ENCODE measurements at regions of chr1 and their contacts with region 1.

Region 1: GRCh38 chr1:168342572-168343280 is 62.0 kb downstream of the TBX19 start:
- DNase-seq: peak; percentile 94
- ATAC-seq: peak; percentile 98
- H3K4me3 Mint-ChIP-seq: no peak overlapping the region
- H3K27ac Mint-ChIP-seq: peak overlapping the region; percentile 27
- H3K4me1 Mint-ChIP-seq: peaks cover 24% of the 10 kb centered on the region
- H3K27me3 Mint-ChIP-seq: no peaks in the 10 kb centered on the region

Region 2: DNA sequence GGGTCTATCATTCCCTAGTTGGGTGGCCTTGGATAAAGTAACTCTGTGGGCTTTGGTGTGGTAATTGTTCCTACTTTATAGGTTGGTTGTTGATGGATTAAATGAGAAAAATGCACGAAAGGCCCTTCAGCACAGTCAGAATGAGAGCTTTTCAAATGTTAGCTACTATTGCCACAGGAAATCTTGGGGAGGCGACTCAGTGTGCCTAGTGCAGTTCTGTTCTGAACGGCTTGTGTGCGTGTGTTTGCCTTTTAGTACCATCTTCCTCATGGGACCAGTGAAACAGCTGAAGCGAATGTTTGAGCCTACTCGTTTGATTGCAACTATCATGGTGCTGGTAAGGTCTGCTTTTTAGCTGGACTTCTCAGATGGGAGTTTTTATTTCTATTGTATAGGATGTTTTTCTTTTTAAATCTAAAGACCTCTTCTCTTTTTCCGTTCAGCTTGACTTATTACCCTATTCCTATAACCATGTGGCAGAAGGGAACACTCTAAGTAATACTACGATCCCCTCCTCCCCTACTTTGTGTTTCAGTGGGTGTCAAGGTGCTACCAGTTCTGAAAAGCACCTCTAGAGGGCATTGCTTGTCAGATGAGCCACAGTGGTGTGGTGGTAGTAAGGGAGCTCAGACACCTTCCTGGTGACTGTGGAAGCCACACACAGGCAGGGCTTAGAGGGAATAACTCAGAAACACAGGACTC is 107.7 kb before region 1 on chr1:
- CTCF ChIA-PET with region 1: interaction called, 9 read pairs
- POLR2A ChIA-PET with region 1: no interaction called
- intact Hi-C with region 1: loop called in 1 of 2 experiments (anchors 5 kb)
- DNase-seq: peak; percentile 58
- ATAC-seq: peak; percentile 77
- H3K4me3 Mint-ChIP-seq: no peak overlapping the region
- H3K27ac Mint-ChIP-seq: peak overlapping the region; percentile 55
- H3K4me1 Mint-ChIP-seq: peaks cover 57% of the 10 kb centered on the region
- H3K27me3 Mint-ChIP-seq: no peaks in the 10 kb centered on the region

Region 3: DNA sequence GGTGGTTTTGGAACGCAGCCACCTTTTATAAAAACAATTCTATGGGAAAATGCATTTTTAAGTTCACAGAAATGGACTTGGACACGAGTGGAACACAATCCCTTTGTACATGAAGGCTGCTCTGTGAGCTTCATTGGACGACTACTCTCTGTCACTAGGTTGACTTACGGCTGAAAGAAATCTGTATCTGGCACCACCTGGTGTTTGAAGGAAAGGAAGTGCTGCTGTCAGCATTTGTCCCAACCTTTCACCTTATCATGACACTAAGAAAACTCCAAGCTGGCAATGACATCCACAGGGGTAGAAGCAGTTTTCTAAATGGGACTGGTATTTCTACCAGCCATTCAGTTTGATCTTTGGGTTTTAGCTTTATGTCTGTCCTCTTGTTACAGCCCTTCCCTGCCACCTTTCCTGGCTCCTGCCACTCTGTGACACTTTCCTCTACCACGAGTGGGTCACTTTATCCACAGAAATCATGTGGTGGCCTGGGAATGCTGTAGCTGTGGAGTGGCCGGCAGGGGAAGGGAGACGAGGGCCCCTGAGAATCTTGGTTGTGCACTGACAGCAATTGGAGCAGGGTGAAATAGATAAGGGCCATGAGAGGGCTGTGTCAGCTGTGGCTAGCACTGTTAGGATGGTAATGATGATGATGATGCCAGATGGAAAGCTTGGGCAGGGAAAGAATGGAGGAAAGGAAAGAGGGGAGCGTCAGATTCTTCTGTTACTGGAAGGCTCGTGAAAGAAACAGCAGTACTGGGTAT is 23.2 kb after region 1 on chr1:
- CTCF ChIA-PET with region 1: interaction called, 97 read pairs
- POLR2A ChIA-PET with region 1: no interaction called
- intact Hi-C with region 1: loop called (anchors 1 to 2 kb)
- DNase-seq: no peak
- ATAC-seq: no peak
- H3K4me3 Mint-ChIP-seq: no peak overlapping the region
- H3K27ac Mint-ChIP-seq: no peak overlapping the region
- H3K4me1 Mint-ChIP-seq: peaks cover 28% of the 10 kb centered on the region
- H3K27me3 Mint-ChIP-seq: peaks cover 2% of the 10 kb centered on the region

Region 4: GRCh38 chr1:168408536-168409242 is 66.0 kb after region 1 on chr1:
- CTCF ChIA-PET with region 1: interaction called, 10 read pairs
- POLR2A ChIA-PET with region 1: no interaction called
- intact Hi-C with region 1: loop called (anchors 2 to 5 kb)
- DNase-seq: peak; percentile 79
- ATAC-seq: peak; percentile 90
- H3K4me3 Mint-ChIP-seq: peak overlapping the region; percentile 10
- H3K27ac Mint-ChIP-seq: peak overlapping the region; percentile 86
- H3K4me1 Mint-ChIP-seq: peaks cover 37% of the 10 kb centered on the region
- H3K27me3 Mint-ChIP-seq: no peaks in the 10 kb centered on the region

Region 5: GRCh38 chr1:168446081-168446480 is 103.4 kb after region 1 on chr1:
- CTCF ChIA-PET with region 1: interaction called, 77 read pairs
- POLR2A ChIA-PET with region 1: no interaction called
- intact Hi-C with region 1: no loop called
- DNase-seq: no peak
- ATAC-seq: no peak
- H3K4me3 Mint-ChIP-seq: no peak overlapping the region
- H3K27ac Mint-ChIP-seq: no peak overlapping the region
- H3K4me1 Mint-ChIP-seq: peaks cover 31% of the 10 kb centered on the region
- H3K27me3 Mint-ChIP-seq: no peaks in the 10 kb centered on the region

Region 6: GRCh38 chr1:168603501-168604110 is 260.9 kb after region 1 on chr1:
- CTCF ChIA-PET with region 1: interaction called, 12 read pairs
- POLR2A ChIA-PET with region 1: no interaction called
- intact Hi-C with region 1: no loop called
- DNase-seq: peak; percentile 84
- ATAC-seq: peak; percentile 78
- H3K4me3 Mint-ChIP-seq: no peak overlapping the region
- H3K27ac Mint-ChIP-seq: no peak overlapping the region
- H3K4me1 Mint-ChIP-seq: no peaks in the 10 kb centered on the region
- H3K27me3 Mint-ChIP-seq: no peaks in the 10 kb centered on the region